SK-N-SH (cell line): ENCODE measurements at regions of chr12 and their contacts with region 1.

Region 1: DNA sequence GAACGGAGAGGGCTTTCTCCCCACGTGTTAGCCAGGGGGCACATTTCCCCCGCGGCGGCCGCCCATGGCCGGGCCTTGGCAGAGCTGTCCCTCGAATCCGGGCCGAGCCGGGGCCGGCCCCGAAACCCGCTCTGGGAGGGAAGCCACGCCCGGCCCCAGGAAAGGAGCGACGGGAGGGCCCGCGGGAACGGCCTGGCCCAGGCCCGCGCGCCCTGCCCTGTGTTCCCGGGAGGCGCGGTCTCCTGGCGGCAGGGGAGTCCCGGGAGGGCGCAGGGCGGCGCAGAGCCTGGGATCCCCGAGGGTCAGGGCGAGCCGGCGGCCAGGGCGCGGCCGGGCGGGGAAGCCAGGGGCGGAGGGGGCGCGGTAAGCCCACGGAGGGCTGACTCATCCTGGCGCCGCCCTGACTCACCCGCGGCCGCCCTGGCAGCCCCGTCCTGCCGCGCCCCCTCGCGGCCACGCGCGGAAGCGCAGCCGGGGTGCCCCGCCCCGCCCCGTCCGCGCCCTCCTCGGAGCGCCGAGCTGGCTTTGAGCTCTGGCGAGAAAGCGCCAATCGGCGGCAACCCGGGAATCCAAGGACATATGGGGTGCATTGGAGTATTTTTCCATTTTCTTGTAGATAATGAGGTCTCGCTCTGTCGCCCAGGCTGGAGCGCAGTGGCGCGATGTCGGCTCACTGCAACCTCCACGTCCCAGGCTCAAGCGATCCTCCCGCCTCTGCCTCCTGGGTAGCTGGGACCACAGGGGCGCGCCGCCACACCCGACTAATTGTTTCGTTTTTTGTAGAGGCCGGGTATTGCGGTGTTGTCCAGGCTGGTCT is 31.8 kb upstream of the PLEKHG6 start:
- DNase-seq: peak; percentile 98
- H3K4me3 ChIP-seq: peak overlapping the region; percentile 54 to 59
- H3K27ac ChIP-seq: peak overlapping the region; percentile 75 to 88; a peak in 3 of 4 replicates
- H3K4me1 ChIP-seq: peaks cover 32 to 33% of the 10 kb centered on the region in 2 experiments; a peak in 3 of 4 replicates
- H3K27me3 ChIP-seq: no peaks in the 10 kb centered on the region
- CTCF ChIP-seq: peak; percentile 68
- EP300 ChIP-seq: no peak; a peak in 1 of 4 replicates
- RAD21 ChIP-seq: peak; percentile 75

Region 2: DNA sequence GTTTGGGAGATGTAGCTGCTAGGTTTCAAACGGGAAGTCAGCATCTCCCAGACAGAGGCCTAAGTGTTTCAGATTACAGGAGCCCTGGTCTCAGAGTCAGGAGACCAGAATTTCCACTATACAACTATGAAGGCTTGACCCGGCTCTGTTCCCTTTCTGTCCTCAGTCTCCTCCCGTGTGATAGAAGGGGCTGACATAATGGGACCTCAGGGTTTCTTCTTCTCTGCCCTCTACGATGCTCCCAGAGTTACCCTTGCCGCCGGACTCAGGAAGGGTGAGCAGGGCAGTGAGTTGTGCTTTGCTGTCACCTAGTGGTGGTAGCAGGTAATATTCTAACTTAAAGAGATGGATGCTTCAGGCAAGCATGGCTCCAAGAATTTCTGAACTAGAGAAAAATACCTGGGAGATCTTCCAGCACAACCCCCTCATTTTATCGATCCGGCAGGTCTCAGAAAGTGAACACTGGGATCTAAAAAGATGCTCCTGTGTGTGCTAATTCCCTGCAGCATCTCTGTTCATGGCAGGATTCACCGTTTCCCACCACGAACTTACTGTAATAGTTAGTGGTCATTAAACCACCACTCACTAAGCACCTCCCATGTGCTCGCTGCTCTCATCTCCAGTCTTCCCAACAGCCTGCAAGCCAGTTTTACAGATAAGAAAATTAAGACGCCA is 238.6 kb before region 1 on chr12:
- CTCF ChIA-PET with region 1: interaction called, 17 read pairs
- POLR2A ChIA-PET with region 1: no interaction called
- DNase-seq: peak; percentile 83
- H3K4me3 ChIP-seq: no peak overlapping the region; a peak in 1 of 4 replicates
- H3K27ac ChIP-seq: no peak overlapping the region; a peak in 1 of 4 replicates
- H3K4me1 ChIP-seq: peaks cover 0 to 12% of the 10 kb centered on the region in 2 experiments; a peak in 1 of 4 replicates
- H3K27me3 ChIP-seq: no peaks in the 10 kb centered on the region
- CTCF ChIP-seq: peak; percentile 90
- EP300 ChIP-seq: no peak
- RAD21 ChIP-seq: peak; percentile 98

Region 3: DNA sequence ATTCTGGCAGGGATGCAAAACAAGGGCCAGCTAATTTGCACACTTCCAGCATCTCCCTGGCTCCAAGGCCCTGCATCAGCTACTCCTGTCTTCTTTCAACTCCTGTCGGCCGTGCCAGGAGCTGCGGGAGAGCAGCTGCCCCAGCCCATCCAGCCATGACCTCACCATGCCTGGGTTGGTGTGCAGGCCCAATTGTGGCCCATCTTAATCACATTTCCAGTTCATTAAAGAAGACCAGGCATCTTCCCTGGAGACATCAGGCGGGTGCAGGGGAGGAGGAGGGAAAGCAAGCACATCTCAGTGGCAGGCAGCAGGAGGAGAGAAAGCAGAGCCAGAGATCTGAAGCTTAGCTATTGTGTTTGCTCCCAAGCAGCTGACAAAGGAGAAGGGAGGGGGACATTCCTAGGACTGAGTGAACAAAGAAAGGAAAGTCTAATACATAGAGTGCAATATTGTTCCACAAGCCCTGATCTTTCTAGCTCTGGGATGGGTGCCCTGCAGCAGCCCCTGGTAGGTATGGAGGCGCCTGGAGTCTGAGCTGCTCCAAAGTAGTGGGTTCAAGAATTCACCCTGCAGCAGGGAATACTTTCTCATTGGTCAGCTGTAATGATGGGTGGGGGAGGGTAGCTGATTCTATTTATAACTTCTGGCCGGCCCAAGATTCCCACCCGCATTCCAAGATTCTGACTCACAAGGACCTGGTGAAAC is 194.2 kb before region 1 on chr12:
- CTCF ChIA-PET with region 1: interaction called, 22 read pairs
- POLR2A ChIA-PET with region 1: no interaction called
- DNase-seq: peak; percentile 85
- H3K4me3 ChIP-seq: no peak overlapping the region
- H3K27ac ChIP-seq: peak overlapping the region; percentile 50 to 98
- H3K4me1 ChIP-seq: peaks cover 27 to 56% of the 10 kb centered on the region in 2 experiments; a peak in 3 of 4 replicates
- H3K27me3 ChIP-seq: no peaks in the 10 kb centered on the region
- CTCF ChIP-seq: no peak
- EP300 ChIP-seq: peak in 1 of 2 experiments; percentile 95; a peak in 3 of 4 replicates
- RAD21 ChIP-seq: peak; percentile 34

Region 4: GRCh38 chr12:6187948-6188793 is 90.5 kb before region 1 on chr12:
- CTCF ChIA-PET with region 1: interaction called, 299 read pairs
- POLR2A ChIA-PET with region 1: interaction called, 3 read pairs
- DNase-seq: no peak
- H3K4me3 ChIP-seq: no peak overlapping the region
- H3K27ac ChIP-seq: no peak overlapping the region
- H3K4me1 ChIP-seq: peaks cover 0 to 12% of the 10 kb centered on the region in 2 experiments; a peak in 1 of 4 replicates
- H3K27me3 ChIP-seq: no peaks in the 10 kb centered on the region
- CTCF ChIP-seq: no peak
- EP300 ChIP-seq: no peak
- RAD21 ChIP-seq: no peak

Region 5: DNA sequence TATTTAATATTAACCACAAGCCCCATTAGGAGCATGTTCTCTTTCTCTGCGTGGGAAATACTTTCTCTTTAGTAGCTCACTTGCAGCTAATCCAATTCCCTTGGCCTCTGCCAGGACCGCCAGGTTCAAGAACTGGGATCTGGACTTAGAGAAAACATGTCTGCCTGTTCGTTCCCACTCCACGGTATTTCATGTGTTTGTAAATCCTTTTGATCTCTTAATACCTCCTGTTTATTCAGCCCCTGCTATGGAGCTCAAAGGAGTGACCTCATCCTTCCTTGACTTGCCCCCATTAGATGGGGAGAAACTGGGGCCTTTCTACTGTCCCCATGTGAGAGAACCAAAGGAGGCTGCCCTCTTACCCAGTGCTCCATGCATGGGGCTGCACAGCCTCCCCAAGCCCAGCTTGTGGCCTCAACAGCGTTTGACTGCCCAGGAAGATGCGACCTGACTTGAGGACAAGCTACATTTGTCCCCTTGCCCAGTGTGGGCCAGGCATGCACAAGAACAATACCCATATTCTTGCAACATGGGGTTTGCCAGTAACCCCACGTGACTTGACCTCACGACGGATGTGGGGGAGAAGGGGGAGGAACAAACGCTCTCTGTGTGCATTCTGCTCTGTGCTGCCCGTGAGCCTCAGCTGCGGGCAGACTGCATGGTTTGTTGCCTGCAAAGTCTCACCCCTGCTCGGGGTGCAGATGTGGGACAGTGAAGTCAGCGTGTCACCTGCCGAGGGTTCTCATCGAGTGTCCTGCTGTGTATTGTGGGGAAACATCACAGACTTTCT is 48.1 kb before region 1 on chr12:
- CTCF ChIA-PET with region 1: interaction called, 12 read pairs
- POLR2A ChIA-PET with region 1: no interaction called
- DNase-seq: no peak
- H3K4me3 ChIP-seq: no peak overlapping the region
- H3K27ac ChIP-seq: peak overlapping the region; percentile 43 to 64; a peak in 3 of 4 replicates
- H3K4me1 ChIP-seq: peaks cover 16 to 69% of the 10 kb centered on the region in 2 experiments; a peak in 2 of 4 replicates
- H3K27me3 ChIP-seq: no peaks in the 10 kb centered on the region
- CTCF ChIP-seq: no peak
- EP300 ChIP-seq: no peak
- RAD21 ChIP-seq: no peak